ENCODE measurements at regions of chr3 and their contacts with region 1.

Region 1: DNA sequence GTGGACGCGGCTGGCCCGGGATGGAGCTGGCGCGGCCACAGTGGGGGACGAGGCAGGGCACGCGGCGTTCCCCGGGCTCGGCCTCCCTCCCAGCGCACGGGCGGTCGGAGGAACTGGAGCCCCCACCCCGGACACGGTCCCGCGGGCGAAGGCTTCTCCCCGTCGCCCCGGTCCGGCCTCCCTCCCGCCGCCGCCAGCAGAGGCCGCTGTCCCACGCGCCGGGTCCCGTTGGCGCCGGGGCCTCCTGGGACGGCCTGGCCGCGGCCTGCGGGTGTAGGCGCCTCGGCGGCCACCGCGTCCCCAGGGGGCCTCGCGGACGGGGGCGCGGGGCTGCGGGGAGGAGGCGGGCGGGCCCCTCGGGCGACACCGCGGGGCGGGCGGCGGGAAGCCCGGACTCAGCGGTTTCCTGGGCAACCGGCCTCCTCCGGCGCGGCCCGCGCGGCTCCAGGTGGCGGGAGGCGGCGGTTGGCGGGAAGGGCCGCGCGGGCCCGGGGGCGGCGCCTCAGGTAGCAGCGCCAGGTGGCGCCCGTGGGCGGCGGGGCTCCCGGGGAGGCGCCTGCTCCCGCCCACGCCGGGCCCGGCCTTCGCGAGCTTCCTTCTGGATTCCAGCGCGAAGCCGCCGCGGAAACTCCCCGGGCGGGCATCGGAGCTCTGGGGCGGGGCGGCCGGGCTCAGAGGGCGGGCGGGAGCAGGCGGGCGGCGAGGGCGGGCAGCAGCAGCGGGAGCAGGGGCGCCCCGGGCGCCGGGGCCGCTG is 26.7 kb downstream of the MELTF start:
- DNase-seq: peak; percentile 90
- ATAC-seq: peak; percentile 81
- H3K4me3 Mint-ChIP-seq: peak overlapping the region; percentile 71
- H3K27ac Mint-ChIP-seq: no peak overlapping the region
- H3K4me1 Mint-ChIP-seq: peaks cover 9% of the 10 kb centered on the region
- H3K27me3 Mint-ChIP-seq: no peaks in the 10 kb centered on the region

Region 2: GRCh38 chr3:196554205-196554604 is 448.7 kb before region 1 on chr3:
- CTCF ChIA-PET with region 1: no interaction called
- POLR2A ChIA-PET with region 1: no interaction called
- intact Hi-C with region 1: no loop called
- DNase-seq: no peak
- ATAC-seq: no peak
- H3K4me3 Mint-ChIP-seq: no peak overlapping the region
- H3K27ac Mint-ChIP-seq: no peak overlapping the region
- H3K4me1 Mint-ChIP-seq: no peaks in the 10 kb centered on the region
- H3K27me3 Mint-ChIP-seq: no peaks in the 10 kb centered on the region

Region 3: GRCh38 chr3:196948442-196949284 is 54.2 kb before region 1 on chr3:
- CTCF ChIA-PET with region 1: no interaction called
- POLR2A ChIA-PET with region 1: no interaction called
- intact Hi-C with region 1: no loop called
- DNase-seq: no peak
- ATAC-seq: no peak
- H3K4me3 Mint-ChIP-seq: no peak overlapping the region
- H3K27ac Mint-ChIP-seq: no peak overlapping the region
- H3K4me1 Mint-ChIP-seq: peaks cover 13% of the 10 kb centered on the region
- H3K27me3 Mint-ChIP-seq: no peaks in the 10 kb centered on the region

Region 4: GRCh38 chr3:196969660-196970546 is 33.0 kb before region 1 on chr3:
- CTCF ChIA-PET with region 1: no interaction called
- POLR2A ChIA-PET with region 1: no interaction called
- intact Hi-C with region 1: loop called in 1 of 2 experiments (anchors 2 kb)
- DNase-seq: peak; percentile 80
- ATAC-seq: peak; percentile 65
- H3K4me3 Mint-ChIP-seq: peak overlapping the region; percentile 63
- H3K27ac Mint-ChIP-seq: peak overlapping the region; percentile 31
- H3K4me1 Mint-ChIP-seq: peaks cover 15% of the 10 kb centered on the region
- H3K27me3 Mint-ChIP-seq: peaks cover 11% of the 10 kb centered on the region

Region 5: GRCh38 chr3:197186887-197187588 is 184.2 kb after region 1 on chr3:
- CTCF ChIA-PET with region 1: interaction called, 9 read pairs
- POLR2A ChIA-PET with region 1: no interaction called
- intact Hi-C with region 1: loop called (anchors 1 kb)
- DNase-seq: peak; percentile 16
- ATAC-seq: peak; percentile 73
- H3K4me3 Mint-ChIP-seq: no peak overlapping the region
- H3K27ac Mint-ChIP-seq: no peak overlapping the region
- H3K4me1 Mint-ChIP-seq: peaks cover 16% of the 10 kb centered on the region
- H3K27me3 Mint-ChIP-seq: no peaks in the 10 kb centered on the region

Region 6: GRCh38 chr3:197511130-197511529 is 508.3 kb after region 1 on chr3:
- CTCF ChIA-PET with region 1: no interaction called
- POLR2A ChIA-PET with region 1: no interaction called
- intact Hi-C with region 1: loop called in 1 of 2 experiments (anchors 2 kb)
- DNase-seq: no peak
- ATAC-seq: no peak
- H3K4me3 Mint-ChIP-seq: no peak overlapping the region
- H3K27ac Mint-ChIP-seq: no peak overlapping the region
- H3K4me1 Mint-ChIP-seq: peaks cover 6% of the 10 kb centered on the region
- H3K27me3 Mint-ChIP-seq: no peaks in the 10 kb centered on the region

Measured in activated CD4-positive, alpha-beta T cell treated with anti-CD3 and anti-CD28 coated beads for 36 hours (primary cell).